ENCODE measurements at regions of chr1 and their contacts with region 1.

Region 1: GRCh38 chr1:23539698-23540266 is 8.7 kb upstream of the E2F2 start:
- DNase-seq: peak; percentile 90
- H3K4me3 Mint-ChIP-seq: peak overlapping the region; percentile 31
- H3K27ac Mint-ChIP-seq: peak overlapping the region; percentile 24
- H3K4me1 Mint-ChIP-seq: peaks cover 23% of the 10 kb centered on the region
- H3K27me3 Mint-ChIP-seq: no peaks in the 10 kb centered on the region

Region 2: DNA sequence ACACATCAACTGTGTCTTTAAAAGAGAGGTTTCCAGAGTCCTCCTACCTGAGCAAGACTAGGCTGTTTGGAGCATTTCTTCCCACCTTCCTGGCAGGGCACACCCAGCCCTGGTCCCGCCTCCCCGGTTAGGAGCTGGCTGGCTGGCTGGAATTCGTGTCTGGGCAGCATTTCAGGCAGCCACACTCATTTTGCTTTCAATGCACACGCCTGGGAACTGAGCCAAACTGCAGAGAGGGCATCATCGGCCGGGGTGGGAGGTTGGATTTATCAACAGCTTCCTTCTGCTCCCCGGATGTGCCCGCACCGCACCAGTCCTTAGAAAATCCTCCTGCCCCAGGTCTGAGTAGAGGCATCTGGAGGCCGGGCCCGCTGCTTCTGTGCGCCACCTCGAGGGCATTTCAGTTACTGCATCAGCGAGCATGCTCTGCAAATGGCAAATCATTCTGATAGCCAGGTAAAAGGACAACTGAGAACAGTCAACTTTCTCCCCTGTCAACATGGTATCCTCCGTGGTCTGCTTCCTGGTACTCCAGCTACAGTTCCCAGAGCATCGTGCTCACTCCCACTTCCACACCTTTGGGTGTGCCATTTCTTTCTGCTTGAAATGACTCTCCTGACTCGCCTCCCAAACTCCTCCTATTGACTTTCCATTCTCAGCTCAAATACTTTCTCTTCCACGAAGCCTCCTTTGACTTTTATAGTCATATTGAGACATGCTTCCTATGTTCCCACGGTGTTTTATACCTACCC is 135.9 kb before region 1 on chr1:
- intact Hi-C with region 1: loop called (anchors 1 kb)
- DNase-seq: peak; percentile 72
- H3K4me3 Mint-ChIP-seq: no peak overlapping the region
- H3K27ac Mint-ChIP-seq: no peak overlapping the region
- H3K4me1 Mint-ChIP-seq: peaks cover 12% of the 10 kb centered on the region
- H3K27me3 Mint-ChIP-seq: no peaks in the 10 kb centered on the region

Region 3: GRCh38 chr1:23496490-23497181 is 43.1 kb before region 1 on chr1:
- intact Hi-C with region 1: loop called (anchors 1 kb)
- DNase-seq: no peak
- H3K4me3 Mint-ChIP-seq: no peak overlapping the region
- H3K27ac Mint-ChIP-seq: no peak overlapping the region
- H3K4me1 Mint-ChIP-seq: no peaks in the 10 kb centered on the region
- H3K27me3 Mint-ChIP-seq: peaks cover 4% of the 10 kb centered on the region